Right cardiac atrium (tissue), 5 donors: ENCODE measurements at regions of chr13 and their contacts with region 1.

Region 1: DNA sequence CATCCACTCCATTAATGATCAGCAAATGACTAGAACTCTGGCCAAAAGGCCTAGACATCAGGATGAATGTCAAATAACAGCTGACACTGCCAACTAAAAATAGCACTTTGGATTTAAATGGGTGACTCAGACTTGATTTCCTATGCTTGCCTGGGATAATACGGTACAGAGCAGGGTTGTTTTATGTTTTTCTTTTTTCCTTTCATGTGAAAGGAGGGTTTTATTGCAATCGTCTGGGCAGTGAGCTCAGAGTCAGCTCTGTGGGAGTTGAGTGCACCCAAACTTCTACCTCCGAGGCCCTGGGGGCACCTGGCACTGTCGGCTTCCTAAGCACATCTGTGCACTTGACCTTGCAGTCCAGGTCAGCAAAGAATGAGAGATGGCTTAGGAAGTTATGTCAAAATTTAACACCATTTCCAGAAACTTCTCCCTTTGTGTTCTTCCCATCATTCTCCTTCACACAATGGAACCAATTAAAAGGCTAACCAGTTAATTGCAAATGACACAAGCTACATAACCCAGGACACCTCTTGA is 134.1 kb downstream of the LACC1 start:
- DNase-seq: no peak
- ATAC-seq: peak; percentile 44 to 85
- H3K4me3 ChIP-seq: no peak overlapping the region
- H3K27ac ChIP-seq: no peak overlapping the region
- H3K4me1 ChIP-seq: peaks cover 3% of the 10 kb centered on the region
- H3K27me3 ChIP-seq: no peaks in the 10 kb centered on the region

Region 2: GRCh38 chr13:43405457-43405856 is 608.4 kb before region 1 on chr13:
- intact Hi-C with region 1: no loop called
- DNase-seq: no peak
- ATAC-seq: no peak
- H3K4me3 ChIP-seq: no peak overlapping the region
- H3K27ac ChIP-seq: no peak overlapping the region
- H3K4me1 ChIP-seq: no peaks in the 10 kb centered on the region
- H3K27me3 ChIP-seq: no peaks in the 10 kb centered on the region

Region 3: GRCh38 chr13:43935878-43936277 is 77.9 kb before region 1 on chr13:
- intact Hi-C with region 1: loop called in 1 of 4 experiments (anchors 2 kb)
- DNase-seq: no peak
- ATAC-seq: no peak
- H3K4me3 ChIP-seq: no peak overlapping the region
- H3K27ac ChIP-seq: no peak overlapping the region
- H3K4me1 ChIP-seq: peaks cover 2% of the 10 kb centered on the region
- H3K27me3 ChIP-seq: no peaks in the 10 kb centered on the region